ENCODE measurements at regions of chr6 and their contacts with region 1.

Region 1: GRCh38 chr6:119147101-119148053 is 68.9 kb upstream of the FAM184A start:
- DNase-seq: peak; percentile 80
- H3K4me3 ChIP-seq: no peak overlapping the region
- H3K27me3 ChIP-seq: no peaks in the 10 kb centered on the region
- CTCF ChIP-seq: no peak

Region 2: GRCh38 chr6:118630067-118630466 is 517.3 kb before region 1 on chr6:
- CTCF ChIA-PET with region 1: no interaction called
- POLR2A ChIA-PET with region 1: interaction called, 29 read pairs
- DNase-seq: no peak
- H3K4me3 ChIP-seq: no peak overlapping the region
- H3K27me3 ChIP-seq: no peaks in the 10 kb centered on the region
- CTCF ChIP-seq: no peak

Region 3: DNA sequence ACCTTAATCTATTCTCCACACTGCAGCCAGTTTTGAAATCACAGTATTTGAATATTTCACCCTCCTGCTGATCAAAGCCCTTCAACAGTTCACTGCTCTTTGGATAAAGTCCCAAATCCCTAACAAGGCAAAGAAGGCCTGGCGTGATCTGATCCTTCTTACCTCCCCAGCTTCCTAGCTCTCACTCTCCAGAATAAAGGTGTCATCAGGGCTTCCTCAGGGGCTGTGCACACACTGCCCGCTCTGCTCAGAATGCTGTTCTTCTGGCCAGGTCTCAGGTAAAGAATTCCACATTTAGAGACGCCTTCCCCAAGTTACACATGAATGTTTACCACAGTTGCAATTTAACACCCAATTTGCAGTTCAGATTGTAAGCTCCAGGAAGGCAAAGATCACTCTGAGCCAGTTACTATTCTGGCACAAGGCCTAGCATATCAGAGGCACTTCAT is 153.6 kb before region 1 on chr6:
- CTCF ChIA-PET with region 1: no interaction called
- POLR2A ChIA-PET with region 1: no interaction called
- DNase-seq: no peak
- H3K4me3 ChIP-seq: no peak overlapping the region
- H3K27me3 ChIP-seq: no peaks in the 10 kb centered on the region
- CTCF ChIP-seq: no peak

Region 4: DNA sequence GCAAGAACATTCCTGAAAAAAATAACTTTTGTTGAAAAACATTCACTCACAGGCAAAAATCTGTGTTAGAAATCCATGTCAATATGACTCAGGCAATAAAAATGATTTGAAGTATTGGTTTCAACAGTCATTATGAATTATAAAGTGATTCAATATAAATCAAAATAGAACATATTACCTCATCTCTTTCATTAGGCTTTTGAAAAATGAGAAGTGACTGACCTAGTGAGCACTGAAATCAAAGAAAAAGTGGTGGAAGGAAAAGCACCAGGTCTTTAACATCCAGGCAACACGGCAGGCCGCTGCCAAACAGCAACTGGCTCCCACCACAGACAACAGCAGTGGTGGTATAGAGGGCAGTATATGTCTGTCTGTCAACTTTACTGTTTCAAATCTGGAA is 133.3 kb after region 1 on chr6:
- CTCF ChIA-PET with region 1: no interaction called
- POLR2A ChIA-PET with region 1: no interaction called
- DNase-seq: no peak
- H3K4me3 ChIP-seq: no peak overlapping the region
- H3K27me3 ChIP-seq: no peaks in the 10 kb centered on the region
- CTCF ChIP-seq: no peak

Region 5: GRCh38 chr6:119442776-119443184 is 295.4 kb after region 1 on chr6:
- CTCF ChIA-PET with region 1: no interaction called
- POLR2A ChIA-PET with region 1: no interaction called
- DNase-seq: no peak
- H3K4me3 ChIP-seq: no peak overlapping the region
- H3K27me3 ChIP-seq: no peaks in the 10 kb centered on the region
- CTCF ChIP-seq: no peak

Measured in BJ (cell line).